BJ (cell line): ENCODE measurements at regions of chr5 and their contacts with region 1.

Region 1: GRCh38 chr5:180133060-180133459 is 61.5 kb upstream of the RNF130 start:
- DNase-seq: no peak
- H3K4me3 ChIP-seq: no peak overlapping the region
- H3K27me3 ChIP-seq: no peaks in the 10 kb centered on the region; the same call in 1 of the 2 replicates
- CTCF ChIP-seq: no peak

Region 2: DNA sequence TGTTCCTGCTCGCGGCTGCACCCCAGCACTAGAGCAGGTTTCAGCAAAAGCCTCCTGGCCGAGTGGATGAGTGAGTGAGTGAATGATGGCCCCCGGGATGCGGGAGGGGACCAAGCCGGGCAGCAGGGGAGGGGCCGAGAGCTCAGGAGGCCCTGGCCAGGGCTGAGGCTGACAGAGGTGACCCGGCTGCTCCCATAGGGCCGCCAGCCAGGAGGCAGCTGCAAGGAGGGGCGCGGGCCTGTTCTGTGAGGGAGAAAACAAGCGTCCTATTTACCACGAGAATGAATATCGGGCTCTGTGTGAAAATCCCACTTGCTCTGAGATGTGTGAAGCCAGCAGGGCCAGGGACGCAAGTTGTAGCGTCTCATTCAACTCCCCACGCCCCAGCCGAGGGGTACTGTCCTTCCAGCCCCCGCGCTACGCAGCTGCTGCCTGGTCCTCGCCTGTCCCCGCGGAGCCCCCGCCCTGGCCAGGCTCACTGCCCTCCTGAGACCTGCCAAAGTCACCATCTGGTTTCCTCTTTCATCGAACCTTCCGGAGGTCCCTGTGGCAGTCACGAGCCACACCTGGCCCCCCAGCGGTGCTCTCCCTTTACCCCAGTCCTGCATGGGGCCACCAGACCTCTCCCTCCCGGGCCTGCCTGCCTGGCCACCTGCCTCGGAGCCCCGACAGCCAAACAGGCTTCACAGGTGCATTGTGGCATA is 37.2 kb after region 1 on chr5:
- CTCF ChIA-PET with region 1: no interaction called
- POLR2A ChIA-PET with region 1: interaction called, 13 read pairs
- DNase-seq: no peak
- H3K4me3 ChIP-seq: no peak overlapping the region
- H3K27me3 ChIP-seq: no peaks in the 10 kb centered on the region
- CTCF ChIP-seq: no peak